IMR-90 (cell line): ENCODE measurements at regions of chr15 and their contacts with region 1.

Region 1: GRCh38 chr15:97903971-97904572 is 56.4 kb upstream of the ARRDC4 start:
- DNase-seq: peak; percentile 44
- ATAC-seq: peak; percentile 99
- H3K4me3 ChIP-seq: no peak overlapping the region
- H3K27ac ChIP-seq: no peak overlapping the region
- H3K4me1 ChIP-seq: no peaks in the 10 kb centered on the region
- H3K27me3 ChIP-seq: no peaks in the 10 kb centered on the region
- CTCF ChIP-seq: peak; percentile 66
- POLR2A ChIP-seq: no peak
- RAD21 ChIP-seq: peak; percentile 67

Region 2: DNA sequence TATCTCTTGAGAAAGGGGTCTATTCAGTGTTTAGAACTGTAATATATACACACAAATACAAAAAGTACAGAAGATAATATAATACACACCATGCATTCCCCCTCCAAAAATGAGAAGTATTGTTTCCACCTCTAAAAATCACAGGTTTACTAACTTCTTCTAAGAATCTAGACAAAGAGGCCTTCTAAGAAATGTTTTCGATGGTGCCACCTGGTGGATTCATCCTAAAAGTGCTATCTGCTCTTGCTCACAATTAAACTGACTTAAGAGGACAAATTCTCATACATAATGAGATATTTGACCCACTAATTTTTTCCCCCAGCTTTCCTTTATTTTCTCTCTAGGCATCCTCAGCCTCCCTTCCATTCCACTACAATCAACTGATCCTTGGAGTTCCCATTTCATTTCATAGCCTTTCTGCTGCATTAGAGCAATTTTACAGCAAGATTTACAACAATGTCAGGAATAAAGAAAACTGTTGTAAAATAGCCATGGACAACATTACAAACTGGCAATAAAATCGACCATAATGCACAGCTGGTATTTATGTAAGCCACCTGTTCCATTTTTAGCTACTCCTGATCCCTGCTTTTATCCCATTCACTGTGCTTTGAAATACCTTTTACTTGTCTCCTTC is 181.0 kb after region 1 on chr15:
- CTCF ChIA-PET with region 1: interaction called, 9 read pairs
- POLR2A ChIA-PET with region 1: no interaction called
- dilution Hi-C with region 1: no loop called
- in situ Hi-C with region 1: loop called (anchors 5 kb)
- intact Hi-C with region 1: loop called (anchors 1 kb)
- DNase-seq: peak; percentile 69
- ATAC-seq: peak; percentile 62
- H3K4me3 ChIP-seq: no peak overlapping the region
- H3K27ac ChIP-seq: no peak overlapping the region
- H3K4me1 ChIP-seq: no peaks in the 10 kb centered on the region
- H3K27me3 ChIP-seq: no peaks in the 10 kb centered on the region
- CTCF ChIP-seq: peak; percentile 71
- POLR2A ChIP-seq: no peak
- RAD21 ChIP-seq: peak; percentile 64

Region 3: GRCh38 chr15:98177924-98178592 is 274.0 kb after region 1 on chr15:
- CTCF ChIA-PET with region 1: interaction called, 10 read pairs
- POLR2A ChIA-PET with region 1: no interaction called
- dilution Hi-C with region 1: no loop called
- in situ Hi-C with region 1: no loop called
- intact Hi-C with region 1: loop called (anchors 2 kb)
- DNase-seq: peak; percentile 29
- ATAC-seq: peak; percentile 49
- H3K4me3 ChIP-seq: no peak overlapping the region
- H3K27ac ChIP-seq: no peak overlapping the region
- H3K4me1 ChIP-seq: no peaks in the 10 kb centered on the region
- H3K27me3 ChIP-seq: no peaks in the 10 kb centered on the region
- CTCF ChIP-seq: peak; percentile 50
- POLR2A ChIP-seq: no peak
- RAD21 ChIP-seq: peak; percentile 67

Region 4: DNA sequence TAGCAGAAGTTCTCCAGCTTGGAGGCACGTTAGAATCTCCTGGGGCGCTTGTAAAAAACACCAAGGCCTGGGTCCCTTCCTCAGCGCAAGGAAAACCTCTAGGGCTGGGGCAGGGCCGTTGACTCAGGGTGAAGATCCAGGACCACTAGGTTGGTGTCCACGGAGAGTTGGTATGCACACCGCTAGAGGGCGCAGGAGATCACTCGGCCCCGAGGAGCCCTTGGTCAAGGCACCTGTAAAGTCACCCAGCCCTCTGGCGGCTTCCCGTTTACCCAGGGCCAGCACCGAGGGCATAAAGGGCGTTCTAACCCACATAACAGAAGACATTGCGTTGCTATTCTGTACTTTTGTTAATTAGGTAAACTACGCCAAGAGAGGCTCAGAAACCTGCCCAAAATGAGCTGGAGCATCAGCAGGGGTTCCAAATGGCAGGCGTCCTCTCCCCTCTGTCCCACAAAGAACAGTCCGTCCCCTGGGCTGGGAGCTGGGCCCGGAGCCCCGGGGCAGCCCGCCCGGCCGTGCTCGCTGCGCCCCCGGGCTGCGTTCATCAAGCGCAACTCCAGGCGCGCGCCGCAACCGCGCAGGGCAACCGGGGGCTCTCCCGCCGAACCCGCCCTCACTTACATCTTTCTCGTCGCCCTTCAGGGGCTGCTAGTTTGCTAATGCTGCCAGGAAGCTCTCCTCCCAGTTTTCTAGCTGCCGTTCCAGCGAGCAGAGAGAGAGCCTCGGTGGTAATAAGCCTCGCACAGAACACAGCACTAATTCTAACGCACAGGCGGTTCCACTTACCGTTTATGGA is 388.6 kb after region 1 on chr15:
- CTCF ChIA-PET with region 1: interaction called, 3 read pairs
- POLR2A ChIA-PET with region 1: no interaction called
- dilution Hi-C with region 1: no loop called
- in situ Hi-C with region 1: loop called (anchors 5 kb)
- intact Hi-C with region 1: loop called (anchors 1 kb)
- DNase-seq: no peak
- ATAC-seq: peak; percentile 48
- H3K4me3 ChIP-seq: no peak overlapping the region
- H3K27ac ChIP-seq: no peak overlapping the region
- H3K4me1 ChIP-seq: no peaks in the 10 kb centered on the region
- H3K27me3 ChIP-seq: no peaks in the 10 kb centered on the region
- CTCF ChIP-seq: peak; percentile 41
- POLR2A ChIP-seq: no peak
- RAD21 ChIP-seq: no peak